Heart right ventricle (tissue), 16 donors: ENCODE measurements at regions of chr12 and their contacts with region 1.

Region 1: DNA sequence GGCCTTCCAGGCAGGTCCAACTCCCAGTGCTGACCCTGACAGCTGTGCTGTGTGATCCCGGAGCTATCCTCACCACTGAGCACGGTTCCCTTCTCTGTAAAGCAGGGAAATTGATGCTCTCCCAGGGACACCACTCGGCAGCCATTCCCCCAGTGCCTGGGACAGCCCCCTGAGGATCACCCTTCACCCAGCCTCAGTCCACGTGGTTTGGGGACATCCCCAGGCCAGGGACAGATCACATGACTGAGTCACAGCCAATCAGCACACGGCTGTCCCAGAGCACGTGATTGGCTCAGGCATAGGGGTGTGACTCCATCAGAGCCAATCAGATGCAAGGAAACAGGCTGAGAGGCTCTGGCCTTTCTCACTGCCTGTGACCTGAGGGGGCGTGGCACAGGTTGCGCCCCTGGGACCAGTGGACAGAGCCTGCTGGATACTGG is 68.8 kb upstream of the SFSWAP start:
- DNase-seq: no peak
- ATAC-seq: no peak
- H3K4me3 ChIP-seq: no peak overlapping the region
- H3K27ac ChIP-seq: no peak overlapping the region
- H3K4me1 ChIP-seq: no peaks in the 10 kb centered on the region
- H3K27me3 ChIP-seq: peaks cover 2 to 57% (median 38%) of the 10 kb centered on the region in 7 donors
- CTCF ChIP-seq: no peak

Region 2: GRCh38 chr12:131311764-131312163 is 330.4 kb before region 1 on chr12:
- intact Hi-C with region 1: loop called in 5 of 10 experiments (anchors 5 kb)
- DNase-seq: no peak
- ATAC-seq: no peak
- H3K4me3 ChIP-seq: no peak overlapping the region
- H3K27ac ChIP-seq: no peak overlapping the region
- H3K4me1 ChIP-seq: no peaks in the 10 kb centered on the region
- H3K27me3 ChIP-seq: peaks cover 0 to 65% (median 31%) of the 10 kb centered on the region in 7 donors
- CTCF ChIP-seq: no peak